B cell (primary cell): ENCODE measurements at regions of chr5 and their contacts with region 1.

Region 1: DNA sequence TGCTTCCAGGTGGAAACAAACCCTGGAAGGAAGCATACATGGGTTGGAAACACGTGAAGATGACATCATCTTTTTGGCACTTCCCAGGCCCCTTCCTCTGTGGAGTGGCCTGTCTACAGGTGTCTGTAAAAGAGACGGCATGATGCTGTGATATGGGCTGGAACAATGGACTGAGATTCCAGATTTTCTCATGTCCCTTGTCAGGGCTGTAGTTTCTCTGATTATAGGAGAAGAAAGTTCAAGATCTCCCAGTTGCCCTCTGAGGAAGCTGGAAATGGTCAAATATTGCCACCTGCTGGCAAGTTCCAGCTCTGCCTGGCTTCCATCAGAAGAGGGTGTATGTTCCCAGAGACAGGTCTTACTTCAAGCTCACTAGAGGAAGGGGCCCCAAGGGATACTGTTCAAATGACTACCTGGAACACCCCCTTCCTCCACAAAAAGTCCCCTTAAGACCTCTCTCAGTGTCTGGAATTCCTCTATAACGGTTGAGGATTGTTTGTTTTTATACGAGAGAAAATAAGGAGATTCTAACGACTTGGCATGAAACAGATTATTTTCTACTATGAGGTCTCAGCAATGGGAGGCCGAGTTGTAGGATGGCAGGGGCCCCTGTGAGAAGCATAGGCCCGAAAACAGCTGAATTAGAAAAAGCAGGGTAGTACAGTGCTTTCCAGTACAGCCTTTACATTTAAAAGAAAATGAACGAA is 7.3 kb upstream of the ANXA6 start:
- DNase-seq: peak; percentile 89
- ATAC-seq: peak; percentile 97
- H3K4me3 ChIP-seq: no peak overlapping the region
- H3K4me3 Mint-ChIP-seq: no peak overlapping the region
- H3K27ac ChIP-seq: no peak overlapping the region
- H3K27ac Mint-ChIP-seq: peak overlapping the region; percentile 72
- H3K4me1 ChIP-seq: peaks cover 21 to 28% of the 10 kb centered on the region in 2 donors
- H3K4me1 Mint-ChIP-seq: peaks cover 36% of the 10 kb centered on the region
- H3K27me3 ChIP-seq: no peaks in the 10 kb centered on the region
- H3K27me3 Mint-ChIP-seq: no peaks in the 10 kb centered on the region
- CTCF ChIP-seq: peak; percentile 95

Region 2: DNA sequence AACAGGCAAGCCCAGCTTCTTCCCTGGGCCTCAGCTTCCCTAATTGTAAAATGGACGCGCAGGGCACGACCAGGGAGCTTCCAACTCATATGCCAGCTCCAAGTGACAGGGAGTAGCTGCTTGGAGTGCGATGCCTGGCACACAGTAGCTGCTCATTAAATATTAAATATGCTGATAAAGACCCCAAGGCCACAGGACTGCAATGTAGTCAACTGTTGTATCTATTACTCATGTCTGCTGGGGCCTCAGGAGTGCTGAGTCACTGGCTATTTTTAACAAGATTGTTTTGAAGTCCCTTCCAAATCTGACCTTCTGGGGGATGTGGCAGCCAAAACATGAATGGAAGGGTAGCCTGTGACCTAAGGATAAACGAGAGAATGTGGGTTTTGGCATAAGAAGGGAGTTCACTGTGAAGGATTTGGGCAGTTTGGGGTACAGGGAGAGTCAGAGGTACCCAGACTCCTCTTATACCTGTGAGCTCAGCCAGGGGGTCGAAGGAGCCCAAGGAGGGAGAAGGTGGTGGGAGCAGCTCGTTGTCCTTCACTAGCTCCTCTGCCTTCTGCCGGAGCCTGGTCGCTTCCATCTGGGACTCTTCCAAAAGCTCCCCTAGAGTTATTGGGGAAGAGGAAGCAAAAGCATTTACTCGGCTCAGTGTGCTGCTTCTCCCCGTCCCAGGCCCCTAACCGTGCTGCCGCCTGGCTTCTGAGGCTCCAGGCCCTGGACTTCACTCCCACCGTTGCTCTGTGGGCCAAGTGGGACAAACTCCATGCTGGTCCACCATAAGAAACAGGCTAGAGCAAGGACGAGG is 101.5 kb before region 1 on chr5:
- CTCF ChIA-PET with region 1: interaction called, 24 read pairs
- POLR2A ChIA-PET with region 1: no interaction called
- intact Hi-C with region 1: no loop called
- DNase-seq: no peak
- ATAC-seq: no peak
- H3K4me3 ChIP-seq: no peak overlapping the region
- H3K4me3 Mint-ChIP-seq: no peak overlapping the region
- H3K27ac ChIP-seq: no peak overlapping the region
- H3K27ac Mint-ChIP-seq: peak overlapping the region; percentile 72
- H3K4me1 ChIP-seq: peaks cover 44 to 54% of the 10 kb centered on the region in 2 donors
- H3K4me1 Mint-ChIP-seq: peaks cover 69% of the 10 kb centered on the region
- H3K27me3 ChIP-seq: no peaks in the 10 kb centered on the region
- H3K27me3 Mint-ChIP-seq: no peaks in the 10 kb centered on the region
- CTCF ChIP-seq: no peak

Region 3: DNA sequence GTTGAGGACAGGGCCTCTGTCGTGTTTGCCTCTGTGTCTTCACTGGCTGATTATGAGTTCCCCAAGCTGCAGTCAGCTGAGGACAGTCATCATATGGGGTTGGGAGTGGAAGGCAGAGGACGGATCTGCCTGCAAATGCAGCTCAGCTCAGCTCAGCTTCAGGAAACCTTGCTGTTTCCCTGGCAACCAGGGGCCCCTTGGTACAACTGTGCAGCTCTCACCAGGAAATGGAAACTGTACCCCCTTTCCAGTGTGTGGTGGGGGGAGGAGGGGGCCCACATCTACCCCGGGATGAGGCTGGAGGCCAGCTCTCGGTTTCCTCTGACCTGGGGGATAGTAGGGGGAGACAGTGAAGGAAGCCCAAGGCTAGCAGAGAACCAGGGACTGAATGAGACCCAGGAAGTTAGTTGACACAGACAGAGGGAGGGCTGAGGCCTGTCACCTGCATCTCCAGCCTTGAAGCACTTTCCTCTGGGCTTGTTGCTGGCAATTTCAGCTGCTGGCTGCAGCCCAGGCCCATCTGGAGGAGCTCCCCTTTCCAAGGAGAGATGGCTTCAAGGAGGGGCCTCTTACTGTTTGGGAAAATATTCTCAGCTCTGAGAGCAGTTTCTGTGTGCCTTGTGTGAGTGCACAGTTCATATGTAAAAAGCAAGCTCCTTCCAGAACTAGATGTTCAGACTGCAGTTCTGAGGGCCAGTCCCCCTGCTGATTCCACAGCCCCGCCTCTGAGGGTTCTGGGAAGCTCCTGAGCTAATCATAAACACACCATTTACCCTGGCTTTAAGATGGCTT is 14.2 kb before region 1 on chr5:
- CTCF ChIA-PET with region 1: interaction called, 1,701 read pairs
- POLR2A ChIA-PET with region 1: interaction called, 5 read pairs
- intact Hi-C with region 1: no loop called
- DNase-seq: peak; percentile 61
- ATAC-seq: peak; percentile 69
- H3K4me3 ChIP-seq: peak overlapping the region in 3 of 5 experiments; percentile 9 to 22 (median 18)
- H3K4me3 Mint-ChIP-seq: peak overlapping the region; percentile 69
- H3K27ac ChIP-seq: peak overlapping the region; percentile 74 to 91
- H3K27ac Mint-ChIP-seq: peak overlapping the region; percentile 93
- H3K4me1 ChIP-seq: peaks cover 100% of the 10 kb centered on the region in 2 donors
- H3K4me1 Mint-ChIP-seq: peaks cover 97% of the 10 kb centered on the region
- H3K27me3 ChIP-seq: no peaks in the 10 kb centered on the region
- H3K27me3 Mint-ChIP-seq: no peaks in the 10 kb centered on the region
- CTCF ChIP-seq: no peak

Region 4: DNA sequence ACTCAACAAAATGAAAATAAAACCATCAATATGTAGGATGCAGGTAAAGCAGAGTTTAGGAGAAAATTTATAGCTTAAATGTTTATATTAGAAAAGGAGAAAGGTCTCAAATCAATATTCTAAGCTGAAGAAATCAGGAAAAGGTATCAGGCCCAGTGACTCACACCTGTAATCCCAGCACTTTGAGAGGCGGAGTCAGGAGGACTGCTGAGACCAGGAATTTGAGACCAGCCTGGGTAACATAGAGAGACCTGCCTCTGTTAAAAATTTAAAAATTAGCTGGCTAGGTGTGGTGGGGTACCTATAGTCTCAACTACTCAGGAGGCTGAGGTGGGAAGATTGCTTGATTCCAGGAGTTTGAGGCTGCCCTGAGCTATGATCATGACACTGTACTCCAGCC is 26.8 kb after region 1 on chr5:
- CTCF ChIA-PET with region 1: interaction called, 13 read pairs
- POLR2A ChIA-PET with region 1: no interaction called
- intact Hi-C with region 1: loop called (anchors 2 kb)
- DNase-seq: no peak
- ATAC-seq: no peak
- H3K4me3 ChIP-seq: peak overlapping the region in 1 of 5 experiments; percentile 8
- H3K4me3 Mint-ChIP-seq: peak overlapping the region; percentile 16
- H3K27ac ChIP-seq: peak overlapping the region; percentile 19 to 78
- H3K27ac Mint-ChIP-seq: peak overlapping the region; percentile 6
- H3K4me1 ChIP-seq: peaks cover 47 to 67% of the 10 kb centered on the region in 2 donors
- H3K4me1 Mint-ChIP-seq: peaks cover 76% of the 10 kb centered on the region
- H3K27me3 ChIP-seq: no peaks in the 10 kb centered on the region
- H3K27me3 Mint-ChIP-seq: no peaks in the 10 kb centered on the region
- CTCF ChIP-seq: no peak

Region 5: DNA sequence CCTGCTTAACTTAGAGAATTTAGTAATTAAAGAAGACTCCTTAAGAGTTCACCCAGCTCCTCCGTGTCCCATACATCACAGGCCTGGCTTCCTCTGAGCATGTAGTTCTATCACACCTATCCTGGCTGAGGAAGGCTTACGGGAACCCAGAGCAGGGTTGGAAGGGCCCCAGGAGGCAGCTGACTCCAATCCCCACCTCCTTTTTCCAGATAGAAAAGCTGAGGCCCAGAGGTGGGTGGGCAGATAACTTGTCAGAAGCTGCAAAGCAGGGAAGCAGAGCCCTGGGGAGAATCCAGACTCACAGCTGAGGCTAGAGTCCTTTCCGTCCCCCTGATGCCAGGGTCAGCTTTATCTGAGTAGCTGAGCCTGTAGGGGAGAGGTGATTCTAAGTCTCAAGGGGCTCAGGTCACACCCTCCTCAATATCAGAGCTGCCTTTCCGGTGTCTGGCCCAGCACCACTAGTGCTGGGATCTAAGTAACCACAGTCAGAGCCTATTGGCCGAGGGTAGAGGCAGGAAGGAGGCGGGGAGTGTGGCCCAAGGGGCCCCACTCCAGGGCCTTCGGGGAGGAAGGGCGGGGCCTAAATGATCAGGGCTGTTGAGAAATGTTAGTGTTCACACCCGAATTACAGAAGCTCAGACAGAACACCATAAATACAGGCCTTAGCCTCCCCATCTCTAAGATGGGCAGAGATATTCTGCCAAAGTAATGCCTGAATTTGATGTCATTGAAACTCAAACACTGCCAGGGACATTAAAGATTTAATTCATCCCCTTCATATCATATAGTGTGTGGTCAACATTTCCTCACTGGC is 49.2 kb after region 1 on chr5:
- CTCF ChIA-PET with region 1: interaction called, 43 read pairs
- POLR2A ChIA-PET with region 1: interaction called, 3 read pairs
- intact Hi-C with region 1: no loop called
- DNase-seq: peak; percentile 92
- ATAC-seq: peak; percentile 74
- H3K4me3 ChIP-seq: peak overlapping the region; percentile 35 to 58 (median 38)
- H3K4me3 Mint-ChIP-seq: peak overlapping the region; percentile 79
- H3K27ac ChIP-seq: peak overlapping the region; percentile 96 to 99
- H3K27ac Mint-ChIP-seq: peak overlapping the region; percentile 99
- H3K4me1 ChIP-seq: peaks cover 98 to 100% of the 10 kb centered on the region in 2 donors
- H3K4me1 Mint-ChIP-seq: peaks cover 90% of the 10 kb centered on the region
- H3K27me3 ChIP-seq: no peaks in the 10 kb centered on the region
- H3K27me3 Mint-ChIP-seq: no peaks in the 10 kb centered on the region
- CTCF ChIP-seq: no peak